Caco-2 (cell line): ENCODE measurements at regions of chr17 and their contacts with region 1.

Region 1: DNA sequence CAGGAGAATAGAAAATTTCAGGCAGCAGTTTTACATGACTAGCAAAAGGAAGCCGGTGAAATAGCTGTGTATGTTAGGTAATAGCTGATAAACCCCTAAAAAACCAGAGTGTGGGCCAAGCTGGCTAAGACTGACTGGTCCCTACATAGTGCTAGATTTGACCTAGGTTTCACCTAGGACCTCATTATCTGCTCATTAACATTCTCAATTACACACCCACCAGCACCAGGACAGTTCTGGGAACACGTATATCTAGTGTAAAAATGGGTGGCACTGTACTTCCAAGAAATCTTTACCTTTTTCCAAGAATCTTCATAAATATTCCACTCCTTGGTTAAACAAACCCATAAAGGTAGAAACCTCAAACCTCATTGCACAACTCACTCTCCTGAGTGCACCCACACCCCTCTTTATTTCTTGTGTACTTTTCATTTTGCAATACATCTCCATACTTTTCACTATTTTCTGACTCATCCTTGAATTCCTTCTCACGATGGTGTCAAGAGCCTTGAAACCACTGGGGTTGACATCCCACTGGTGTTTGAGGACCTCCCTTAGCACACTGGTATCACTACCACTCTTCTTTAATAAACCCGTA is 262.7 kb upstream of the KCNJ16 start:
- DNase-seq: peak in 1 of 2 experiments; percentile 24
- H3K4me3 ChIP-seq: no peak overlapping the region
- H3K4me3 Mint-ChIP-seq: no peak overlapping the region
- H3K27ac Mint-ChIP-seq: peak overlapping the region; percentile 30
- H3K4me1 ChIP-seq: no peaks in the 10 kb centered on the region
- H3K4me1 Mint-ChIP-seq: peaks cover 15% of the 10 kb centered on the region
- H3K27me3 ChIP-seq: no peaks in the 10 kb centered on the region
- H3K27me3 Mint-ChIP-seq: no peaks in the 10 kb centered on the region
- CTCF ChIP-seq: no peak

Region 2: DNA sequence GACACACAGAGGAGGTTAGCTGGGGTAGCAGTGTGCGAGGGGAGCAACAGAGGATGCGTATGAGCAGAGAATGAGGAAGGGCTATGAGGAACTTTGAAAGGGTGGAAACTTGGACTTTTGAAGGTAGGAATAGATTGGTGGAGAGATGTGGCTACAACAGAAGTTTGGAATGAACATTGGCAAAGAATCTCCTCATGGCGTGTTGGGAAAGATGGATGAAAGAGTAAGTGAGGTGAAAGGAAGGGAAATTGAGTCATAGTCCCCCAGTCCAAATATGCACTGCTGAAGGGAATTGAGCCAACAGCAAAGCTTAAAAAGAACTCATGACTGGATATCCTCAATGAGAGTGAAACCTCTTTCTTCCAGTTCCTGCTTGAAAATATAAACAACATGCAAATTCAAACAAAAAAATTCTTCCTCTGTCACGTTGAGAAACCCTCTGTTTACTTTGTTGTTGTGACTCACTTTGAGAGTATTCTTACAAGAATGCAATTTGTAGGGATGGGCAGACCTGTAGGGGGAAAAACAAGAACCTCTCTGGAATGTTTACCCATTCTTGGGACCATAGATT is 50.5 kb before region 1 on chr17:
- CTCF ChIA-PET with region 1: no interaction called
- POLR2A ChIA-PET with region 1: no interaction called
- intact Hi-C with region 1: loop called (anchors 1 kb)
- DNase-seq: peak; percentile 44 to 62
- H3K4me3 ChIP-seq: no peak overlapping the region
- H3K4me3 Mint-ChIP-seq: peak overlapping the region; percentile 8
- H3K27ac Mint-ChIP-seq: peak overlapping the region; percentile 78
- H3K4me1 ChIP-seq: peaks cover 38% of the 10 kb centered on the region
- H3K4me1 Mint-ChIP-seq: peaks cover 30% of the 10 kb centered on the region
- H3K27me3 ChIP-seq: no peaks in the 10 kb centered on the region
- H3K27me3 Mint-ChIP-seq: no peaks in the 10 kb centered on the region
- CTCF ChIP-seq: no peak

Region 3: DNA sequence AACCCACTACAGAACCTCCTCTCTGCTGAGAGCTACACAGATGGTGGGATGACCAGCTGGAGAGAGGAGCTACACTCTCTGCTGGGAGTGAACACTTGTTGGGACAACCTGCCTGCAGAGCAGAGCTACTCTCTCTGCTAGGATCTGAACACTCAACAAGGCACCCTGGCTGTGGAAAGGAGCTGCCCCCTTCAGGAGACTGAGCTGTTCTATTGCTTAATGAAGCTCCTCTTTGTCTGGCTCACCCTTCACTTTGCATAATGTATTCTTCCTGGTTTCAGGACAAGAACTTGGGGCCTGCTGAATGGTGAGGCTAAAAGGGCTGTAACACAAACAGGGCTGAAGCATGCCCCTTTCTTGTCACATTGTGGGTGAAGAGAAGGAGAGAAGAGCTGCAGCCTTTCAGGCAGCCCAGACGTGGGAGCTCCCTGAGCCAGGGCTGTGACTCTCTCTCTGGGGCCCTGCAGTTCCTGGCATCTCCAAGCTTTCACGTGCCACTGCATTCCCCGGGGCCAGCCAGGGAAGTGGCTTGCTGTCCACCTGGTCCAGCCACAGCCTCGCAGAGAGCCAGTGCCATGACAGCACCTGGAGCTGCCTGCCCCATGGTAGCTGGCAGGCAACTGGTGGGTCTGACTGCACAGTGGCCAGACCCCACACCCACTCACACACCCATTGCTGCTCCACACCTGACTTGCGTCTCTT is 10.1 kb before region 1 on chr17:
- CTCF ChIA-PET with region 1: no interaction called
- POLR2A ChIA-PET with region 1: no interaction called
- intact Hi-C with region 1: no loop called
- DNase-seq: no peak
- H3K4me3 ChIP-seq: no peak overlapping the region
- H3K4me3 Mint-ChIP-seq: no peak overlapping the region
- H3K27ac Mint-ChIP-seq: no peak overlapping the region
- H3K4me1 ChIP-seq: no peaks in the 10 kb centered on the region
- H3K4me1 Mint-ChIP-seq: no peaks in the 10 kb centered on the region
- H3K27me3 ChIP-seq: no peaks in the 10 kb centered on the region
- H3K27me3 Mint-ChIP-seq: no peaks in the 10 kb centered on the region
- CTCF ChIP-seq: no peak

Region 4: GRCh38 chr17:69857412-69857835 is 45.1 kb after region 1 on chr17:
- CTCF ChIA-PET with region 1: no interaction called
- POLR2A ChIA-PET with region 1: no interaction called
- intact Hi-C with region 1: loop called (anchors 1 kb)
- DNase-seq: peak in 1 of 2 experiments; percentile 26
- H3K4me3 ChIP-seq: no peak overlapping the region
- H3K4me3 Mint-ChIP-seq: no peak overlapping the region
- H3K27ac Mint-ChIP-seq: no peak overlapping the region
- H3K4me1 ChIP-seq: 0 out of 2 replicates have a peak, but pooled peaks cover 9% of the 10 kb centered on the region
- H3K4me1 Mint-ChIP-seq: no peaks in the 10 kb centered on the region
- H3K27me3 ChIP-seq: no peaks in the 10 kb centered on the region
- H3K27me3 Mint-ChIP-seq: no peaks in the 10 kb centered on the region
- CTCF ChIP-seq: no peak

Region 5: DNA sequence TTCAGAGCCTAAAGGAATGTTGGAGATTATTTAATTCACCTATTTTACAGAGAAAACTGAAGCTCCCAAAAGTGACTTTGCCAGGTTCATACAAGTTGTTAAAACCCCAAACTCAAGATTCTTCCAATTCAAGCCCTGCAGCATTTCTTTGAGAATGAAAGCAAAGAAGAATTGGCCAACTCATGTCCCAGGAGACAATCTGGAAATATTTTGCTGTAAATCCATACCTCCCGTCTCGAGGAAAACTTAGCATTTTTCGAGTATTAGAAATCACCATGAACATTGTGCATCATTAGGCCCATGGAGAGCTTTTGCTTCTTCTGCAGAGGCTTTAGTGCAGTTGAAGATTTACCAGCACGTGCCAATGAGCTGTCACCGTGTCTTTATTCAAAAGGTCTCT is 86.3 kb after region 1 on chr17:
- CTCF ChIA-PET with region 1: no interaction called
- POLR2A ChIA-PET with region 1: no interaction called
- intact Hi-C with region 1: no loop called
- DNase-seq: no peak
- H3K4me3 ChIP-seq: no peak overlapping the region
- H3K4me3 Mint-ChIP-seq: no peak overlapping the region
- H3K27ac Mint-ChIP-seq: peak overlapping the region; percentile 2
- H3K4me1 ChIP-seq: peaks cover 41% of the 10 kb centered on the region
- H3K4me1 Mint-ChIP-seq: peaks cover 32% of the 10 kb centered on the region
- H3K27me3 ChIP-seq: no peaks in the 10 kb centered on the region
- H3K27me3 Mint-ChIP-seq: no peaks in the 10 kb centered on the region
- CTCF ChIP-seq: no peak

Region 6: DNA sequence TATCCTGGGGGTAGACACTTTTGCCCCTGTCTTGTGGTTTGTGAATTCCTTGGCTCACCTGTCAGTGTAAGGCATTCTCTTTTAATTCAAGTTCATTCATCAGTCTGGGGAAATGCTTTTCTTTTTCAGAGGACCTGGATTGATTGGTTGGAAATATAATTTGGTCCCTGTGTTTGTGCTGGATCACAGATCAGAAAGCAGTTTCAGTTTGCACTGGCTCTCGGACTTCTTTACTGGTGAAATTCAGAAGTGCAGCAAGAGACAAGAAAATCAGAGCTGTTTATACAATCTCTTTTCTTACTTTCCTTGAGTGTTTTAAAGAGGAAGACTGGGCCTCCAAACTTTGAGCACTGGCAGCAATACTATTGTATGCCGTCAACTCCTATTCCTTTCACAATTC is 100.9 kb after region 1 on chr17:
- CTCF ChIA-PET with region 1: no interaction called
- POLR2A ChIA-PET with region 1: no interaction called
- intact Hi-C with region 1: loop called (anchors 5 kb)
- DNase-seq: no peak
- H3K4me3 ChIP-seq: no peak overlapping the region
- H3K4me3 Mint-ChIP-seq: no peak overlapping the region
- H3K27ac Mint-ChIP-seq: no peak overlapping the region
- H3K4me1 ChIP-seq: peaks cover 8% of the 10 kb centered on the region; the same call in 1 of the 2 replicates
- H3K4me1 Mint-ChIP-seq: peaks cover 6% of the 10 kb centered on the region
- H3K27me3 ChIP-seq: no peaks in the 10 kb centered on the region
- H3K27me3 Mint-ChIP-seq: no peaks in the 10 kb centered on the region
- CTCF ChIP-seq: no peak